ENCODE measurements at regions of chr6 and their contacts with region 1.

Region 1: DNA sequence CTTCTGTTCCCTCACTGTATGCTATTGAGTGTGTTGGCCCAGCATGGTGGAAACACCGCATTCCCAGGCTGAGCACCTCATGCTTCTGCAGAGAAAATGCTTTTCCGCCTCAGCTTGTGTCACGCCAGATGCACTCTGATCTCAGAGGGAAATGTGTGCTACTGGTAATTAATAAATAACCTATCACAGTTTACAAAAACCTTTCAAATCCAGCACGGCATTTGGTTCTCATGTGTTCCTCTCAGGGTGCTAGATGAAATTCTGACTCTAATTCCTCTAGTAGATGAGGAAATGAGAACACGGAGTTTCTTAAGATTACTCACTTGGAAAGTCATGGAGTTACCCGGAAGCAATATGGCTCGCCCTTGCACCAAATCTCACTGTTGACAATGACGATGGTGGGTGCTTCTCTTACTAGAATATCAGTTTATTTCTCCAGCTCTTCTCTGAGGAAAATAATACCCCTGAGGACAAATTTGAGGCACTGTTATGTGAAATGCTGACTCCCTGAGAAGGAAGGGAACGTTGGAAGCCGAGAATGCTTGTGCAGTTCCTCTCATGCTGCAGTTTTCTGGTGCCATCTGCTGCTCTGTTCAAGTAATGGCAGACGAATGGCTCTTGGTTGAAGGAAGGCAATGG is 116.6 kb downstream of the RNF144B start:
- DNase-seq: peak; percentile 36 to 41
- ATAC-seq: peak; percentile 96

Region 2: GRCh38 chr6:18323935-18324705 is 179.6 kb before region 1 on chr6:
- intact Hi-C with region 1: loop called in 1 of 2 experiments (anchors 1 kb)
- DNase-seq: no peak
- ATAC-seq: peak; percentile 76

Region 3: GRCh38 chr6:18330548-18331081 is 173.1 kb before region 1 on chr6:
- intact Hi-C with region 1: loop called in 1 of 2 experiments (anchors 5 kb)
- DNase-seq: no peak
- ATAC-seq: no peak